ENCODE measurements at regions of chr11 and their contacts with region 1.

Region 1: DNA sequence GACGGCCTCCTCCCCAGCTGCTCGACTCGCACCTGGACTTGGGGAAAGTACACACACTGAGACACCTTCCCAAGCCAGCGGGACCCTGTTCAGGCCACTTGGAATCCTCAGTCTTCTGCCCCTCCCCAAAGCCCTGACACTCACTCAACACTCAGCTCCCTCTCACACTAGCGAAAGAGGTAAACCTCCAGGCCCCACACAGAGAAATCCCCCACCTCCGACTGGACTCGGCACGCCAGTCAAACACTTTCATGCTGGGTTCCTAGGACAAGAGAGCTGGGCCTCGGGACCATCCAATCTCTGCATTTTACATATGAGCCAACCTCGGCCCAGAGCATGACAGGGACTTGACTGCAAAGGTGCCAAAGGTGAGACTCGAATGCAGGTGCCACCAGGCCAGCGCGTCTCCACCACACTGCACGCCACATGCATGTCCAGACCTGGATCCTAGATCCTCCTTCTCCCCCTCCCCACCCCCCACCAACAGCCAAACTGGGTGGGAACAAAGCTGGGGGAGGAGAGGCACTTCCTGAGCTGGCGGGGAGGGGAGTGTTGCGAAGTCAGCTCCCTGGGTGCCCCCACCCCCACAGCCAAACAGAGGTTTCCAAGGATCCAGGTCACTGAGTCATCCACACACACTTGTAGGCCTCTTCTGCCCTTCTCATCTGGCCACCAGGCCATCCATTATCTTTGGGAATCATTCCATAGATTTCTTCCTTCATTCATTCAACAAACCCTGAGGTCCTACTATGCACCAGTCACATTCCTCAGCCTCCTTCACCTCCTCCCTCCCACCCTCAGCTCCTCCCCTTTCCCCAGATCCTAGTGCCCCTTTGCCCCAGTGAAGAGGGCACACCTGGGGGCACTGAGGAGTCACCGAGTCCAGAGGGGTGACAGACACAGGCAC is 10.7 kb upstream of the CD5 start:
- DNase-seq: no peak
- H3K4me3 Mint-ChIP-seq: peak overlapping the region; percentile 73
- H3K27ac Mint-ChIP-seq: peak overlapping the region; percentile 89
- H3K4me1 Mint-ChIP-seq: peaks cover 71% of the 10 kb centered on the region
- H3K27me3 Mint-ChIP-seq: no peaks in the 10 kb centered on the region

Region 2: DNA sequence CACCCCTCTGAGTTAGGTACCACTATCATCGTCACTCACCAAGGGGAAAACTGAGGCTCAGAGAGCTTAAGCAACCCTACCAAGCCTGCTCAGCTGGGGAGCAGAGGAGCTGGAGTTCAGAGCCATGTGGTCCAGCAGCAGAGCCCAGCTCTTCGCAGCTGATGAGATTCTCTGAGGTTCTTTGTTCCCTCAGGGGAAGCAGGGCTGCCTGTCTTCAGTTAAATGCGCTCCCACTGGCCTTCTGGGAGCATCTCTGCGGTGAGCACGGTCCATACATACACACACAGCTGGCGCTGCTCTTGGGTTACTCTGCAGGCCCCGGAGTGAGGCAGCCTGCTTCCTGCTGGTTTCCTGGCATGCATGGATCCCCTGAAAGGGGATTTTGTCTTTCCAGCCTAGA is 230.7 kb before region 1 on chr11:
- CTCF ChIA-PET with region 1: no interaction called
- POLR2A ChIA-PET with region 1: no interaction called
- DNase-seq: no peak
- H3K4me3 Mint-ChIP-seq: no peak overlapping the region
- H3K27ac Mint-ChIP-seq: no peak overlapping the region
- H3K4me1 Mint-ChIP-seq: peaks cover 36% of the 10 kb centered on the region
- H3K27me3 Mint-ChIP-seq: peaks cover 2% of the 10 kb centered on the region

Region 3: GRCh38 chr11:61056571-61056970 is 35.1 kb before region 1 on chr11:
- CTCF ChIA-PET with region 1: no interaction called
- POLR2A ChIA-PET with region 1: no interaction called
- DNase-seq: no peak
- H3K4me3 Mint-ChIP-seq: no peak overlapping the region
- H3K27ac Mint-ChIP-seq: peak overlapping the region; percentile 43
- H3K4me1 Mint-ChIP-seq: peaks cover 79% of the 10 kb centered on the region
- H3K27me3 Mint-ChIP-seq: no peaks in the 10 kb centered on the region

Region 4: GRCh38 chr11:61102667-61103571 is 11.3 kb after region 1 on chr11:
- CTCF ChIA-PET with region 1: interaction called, 10 read pairs
- POLR2A ChIA-PET with region 1: interaction called, 11 read pairs
- DNase-seq: peak; percentile 36
- H3K4me3 Mint-ChIP-seq: no peak overlapping the region
- H3K27ac Mint-ChIP-seq: no peak overlapping the region
- H3K4me1 Mint-ChIP-seq: peaks cover 38% of the 10 kb centered on the region
- H3K27me3 Mint-ChIP-seq: no peaks in the 10 kb centered on the region